ENCODE measurements at regions of chr4 and their contacts with region 1.

Region 1: DNA sequence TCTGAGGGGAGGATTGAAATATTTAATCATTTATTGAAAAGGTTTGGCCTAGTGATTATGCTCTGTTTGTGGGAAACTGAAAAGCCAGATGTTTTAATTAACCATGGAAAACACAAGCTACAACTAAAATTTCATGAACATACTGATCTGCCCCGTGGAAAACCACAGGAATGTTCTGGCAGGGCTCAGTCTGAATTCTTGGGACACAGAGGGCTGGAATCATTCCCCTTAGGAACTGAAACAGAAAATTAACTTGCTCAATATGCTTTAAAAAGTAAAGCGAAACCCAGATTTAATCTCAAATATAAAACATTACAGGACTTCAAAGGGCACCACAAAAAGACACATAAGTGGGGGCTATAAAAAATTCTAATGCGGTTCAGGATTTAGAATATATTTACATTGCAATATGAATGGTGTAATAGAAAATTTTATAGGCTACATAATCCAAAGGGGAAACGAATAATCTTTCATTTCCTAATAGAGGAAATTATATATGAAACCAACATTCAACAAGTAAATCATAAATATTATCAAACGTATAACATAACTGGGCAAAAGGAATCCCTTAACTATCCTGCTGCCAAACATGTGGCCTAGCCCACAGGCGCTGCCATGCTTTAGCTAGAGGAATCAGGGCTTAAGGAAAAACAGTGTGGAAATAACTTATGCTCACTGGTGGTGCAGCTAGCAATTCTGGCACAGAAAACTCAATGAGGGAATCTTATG is 70.9 kb downstream of the APBB2 start:
- DNase-seq: no peak
- ATAC-seq: peak; percentile 56
- H3K4me3 ChIP-seq: no peak overlapping the region
- H3K27ac ChIP-seq: peak overlapping the region; percentile 80
- H3K4me1 ChIP-seq: peaks cover 41% of the 10 kb centered on the region
- H3K27me3 ChIP-seq: no peaks in the 10 kb centered on the region
- CTCF ChIP-seq: no peak

Region 2: GRCh38 chr4:40811956-40812355 is 331.5 kb before region 1 on chr4:
- CTCF ChIA-PET with region 1: no interaction called
- POLR2A ChIA-PET with region 1: no interaction called
- in situ Hi-C with region 1: no loop called
- intact Hi-C with region 1: no loop called
- DNase-seq: no peak
- ATAC-seq: no peak
- H3K4me3 ChIP-seq: no peak overlapping the region
- H3K27ac ChIP-seq: no peak overlapping the region
- H3K4me1 ChIP-seq: no peaks in the 10 kb centered on the region
- H3K27me3 ChIP-seq: no peaks in the 10 kb centered on the region
- CTCF ChIP-seq: no peak

Region 3: DNA sequence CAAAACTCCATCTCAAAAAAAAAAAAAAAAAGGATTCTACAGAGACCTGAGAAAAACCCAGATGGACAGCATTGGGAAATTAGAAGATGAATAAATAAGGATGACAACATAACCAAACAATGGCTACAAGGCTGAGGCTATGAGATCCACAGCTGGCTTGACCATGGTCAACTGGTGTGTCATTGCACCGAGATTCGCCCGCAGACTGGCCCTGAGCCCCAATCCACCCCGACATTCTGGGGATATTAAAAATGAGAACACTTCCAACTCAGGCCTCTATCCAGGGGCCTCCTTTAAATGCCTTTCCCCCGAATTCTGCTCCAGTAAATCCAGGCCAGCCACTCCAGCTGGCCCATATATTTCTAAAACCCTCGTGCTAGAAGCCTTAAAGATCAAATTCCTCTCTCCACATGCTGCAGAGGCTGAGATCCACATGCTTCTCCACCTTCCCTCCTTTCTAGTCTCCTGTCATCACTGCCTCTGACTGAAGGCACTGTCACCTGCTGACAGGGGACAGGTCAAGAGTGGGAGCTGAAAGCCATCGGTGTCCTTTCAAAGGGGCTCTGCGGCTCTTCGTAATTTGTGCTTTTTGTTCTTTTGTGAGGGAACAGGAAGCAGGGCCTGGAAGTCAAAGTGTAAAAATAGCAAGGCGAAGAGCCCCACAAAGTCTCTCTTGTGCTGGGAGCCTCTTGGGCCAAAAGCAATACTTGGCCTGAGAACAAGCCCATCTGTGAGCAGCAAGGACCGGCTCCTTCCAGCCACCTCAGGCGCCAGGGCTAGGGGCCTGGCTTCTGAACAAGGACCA is 190.0 kb before region 1 on chr4:
- CTCF ChIA-PET with region 1: no interaction called
- POLR2A ChIA-PET with region 1: no interaction called
- in situ Hi-C with region 1: no loop called
- intact Hi-C with region 1: no loop called
- DNase-seq: no peak
- ATAC-seq: no peak
- H3K4me3 ChIP-seq: no peak overlapping the region
- H3K27ac ChIP-seq: no peak overlapping the region
- H3K4me1 ChIP-seq: no peaks in the 10 kb centered on the region
- H3K27me3 ChIP-seq: no peaks in the 10 kb centered on the region
- CTCF ChIP-seq: no peak

Region 4: DNA sequence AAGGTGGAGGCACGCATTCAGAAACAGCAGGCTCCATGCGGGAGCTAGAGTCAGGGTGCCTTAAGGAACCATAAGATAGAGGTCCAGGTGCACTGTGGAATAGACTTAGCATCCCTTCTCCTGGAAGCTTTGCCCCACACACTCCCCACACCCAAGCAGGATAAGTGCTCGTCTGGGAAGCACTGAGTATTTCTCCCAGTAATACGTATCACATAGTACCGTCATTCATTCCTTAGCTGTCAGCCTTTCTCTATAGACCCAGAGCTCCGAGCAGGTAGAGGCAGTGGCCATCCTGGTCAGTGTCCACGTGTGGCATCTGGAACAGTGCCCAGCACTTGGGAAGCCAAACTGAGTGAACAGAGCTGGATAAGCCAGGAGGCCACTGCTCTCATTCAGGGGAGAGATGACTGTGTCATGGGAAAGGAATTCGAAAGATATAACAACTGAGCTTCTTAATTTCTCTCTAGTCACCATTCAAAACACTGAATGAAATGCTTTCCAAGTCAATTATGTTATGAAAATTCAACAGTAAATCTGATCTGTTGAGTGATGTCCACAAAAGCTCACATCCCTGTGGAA is 61.0 kb after region 1 on chr4:
- CTCF ChIA-PET with region 1: no interaction called
- POLR2A ChIA-PET with region 1: no interaction called
- in situ Hi-C with region 1: no loop called
- intact Hi-C with region 1: loop called (anchors 10 kb)
- DNase-seq: no peak
- ATAC-seq: peak; percentile 78
- H3K4me3 ChIP-seq: no peak overlapping the region
- H3K27ac ChIP-seq: peak overlapping the region; percentile 39; the same call in 1 of the 2 replicates
- H3K4me1 ChIP-seq: peaks cover 39% of the 10 kb centered on the region
- H3K27me3 ChIP-seq: no peaks in the 10 kb centered on the region
- CTCF ChIP-seq: no peak

Region 5: DNA sequence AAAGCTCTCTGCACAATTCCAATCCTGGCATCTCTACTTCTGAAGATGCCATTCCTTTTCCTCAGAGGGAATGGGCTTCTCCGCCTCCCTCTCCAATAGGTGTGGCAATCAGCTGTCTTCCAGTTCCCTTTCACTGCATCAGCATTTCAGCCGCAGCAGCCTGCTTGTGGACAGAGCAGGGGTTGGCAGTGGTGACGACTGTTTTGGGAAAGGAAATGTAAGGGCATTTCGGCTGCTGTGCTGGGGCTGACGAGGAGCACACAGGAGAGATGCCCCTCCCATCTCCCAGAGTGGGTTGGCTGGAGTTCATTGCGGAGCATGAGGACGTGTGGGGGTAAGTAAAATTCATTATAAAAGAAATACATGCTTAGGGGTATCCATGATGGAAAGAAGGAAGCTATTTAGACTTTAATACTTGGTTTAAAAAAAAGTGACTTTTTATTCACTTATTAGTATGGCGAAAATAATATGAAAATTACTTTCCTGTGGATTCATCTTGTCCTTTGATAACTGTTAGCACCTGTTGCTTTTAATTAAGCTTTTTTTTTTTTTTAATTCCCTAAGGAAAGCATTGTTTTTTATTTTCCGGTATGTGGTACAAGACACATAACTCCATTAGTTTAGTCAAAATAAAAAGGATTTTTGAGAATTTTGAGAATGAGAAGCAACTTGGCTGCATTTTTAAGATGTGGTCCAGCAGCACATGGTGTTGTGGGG is 394.7 kb after region 1 on chr4 and contains the start of gene LIMCH1:
- CTCF ChIA-PET with region 1: no interaction called
- POLR2A ChIA-PET with region 1: no interaction called
- in situ Hi-C with region 1: no loop called
- intact Hi-C with region 1: no loop called
- DNase-seq: no peak
- ATAC-seq: no peak
- H3K4me3 ChIP-seq: no peak within 1 kb of the TSS
- H3K27ac ChIP-seq: no peak within 1 kb of the TSS
- H3K4me1 ChIP-seq: no peaks in the 10 kb centered on the region
- H3K27me3 ChIP-seq: no peaks in the 10 kb centered on the region; the same call in 1 of the 2 replicates
- CTCF ChIP-seq: no peak
- total RNA-seq, gene LIMCH1: 3.3 TPM